Caco-2 (cell line): ENCODE measurements at regions of chr14 and their contacts with region 1.

Region 1: GRCh38 chr14:26917086-26917485 is 319.3 kb upstream of the NOVA1 start:
- DNase-seq: peak in 1 of 2 experiments; percentile 5
- H3K4me3 ChIP-seq: no peak overlapping the region
- H3K4me3 Mint-ChIP-seq: no peak overlapping the region
- H3K27ac Mint-ChIP-seq: no peak overlapping the region
- H3K4me1 ChIP-seq: no peaks in the 10 kb centered on the region
- H3K4me1 Mint-ChIP-seq: no peaks in the 10 kb centered on the region
- H3K27me3 ChIP-seq: no peaks in the 10 kb centered on the region
- H3K27me3 Mint-ChIP-seq: no peaks in the 10 kb centered on the region
- CTCF ChIP-seq: peak in 1 of 2 experiments; percentile 35

Region 2: DNA sequence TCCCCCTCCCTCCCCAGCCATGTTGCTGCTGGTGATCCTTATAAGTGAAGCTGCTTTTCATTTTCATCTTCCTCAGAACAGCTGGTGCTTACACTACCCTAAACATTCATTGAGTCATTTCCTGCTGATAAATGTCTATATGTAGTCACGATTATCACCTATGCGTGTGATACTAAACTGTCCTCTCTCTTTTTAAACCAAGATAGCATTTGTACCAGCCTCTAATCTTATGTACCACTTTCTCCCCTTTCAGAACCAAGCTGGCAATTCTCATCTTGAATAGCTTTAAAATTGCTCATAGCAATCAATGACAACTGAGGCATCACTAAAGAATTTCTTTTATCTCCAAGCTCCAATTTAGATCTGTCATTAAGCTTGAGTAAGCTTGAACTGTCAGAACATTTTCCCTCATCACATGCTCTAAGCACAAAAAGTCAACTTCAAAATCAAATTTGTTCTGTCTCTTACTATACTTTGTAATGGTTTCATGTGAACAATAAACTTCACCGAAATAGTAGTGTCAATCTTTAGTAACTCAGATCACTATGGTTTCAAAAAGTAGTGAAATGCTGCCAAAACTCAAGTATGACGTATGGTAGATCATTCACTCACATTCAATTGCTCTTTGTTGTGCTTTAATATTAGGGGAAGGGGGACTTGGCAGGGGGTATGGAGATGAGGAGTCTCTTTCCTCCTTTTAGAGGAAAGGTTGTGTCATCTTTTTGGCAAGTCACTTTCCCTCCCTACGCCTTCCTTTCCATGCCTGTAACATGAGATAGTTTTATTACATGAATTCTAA is 141.1 kb before region 1 on chr14:
- CTCF ChIA-PET with region 1: no interaction called
- POLR2A ChIA-PET with region 1: no interaction called
- intact Hi-C with region 1: loop called (anchors 1 kb)
- DNase-seq: no peak
- H3K4me3 ChIP-seq: no peak overlapping the region
- H3K4me3 Mint-ChIP-seq: peak overlapping the region; percentile 19
- H3K27ac Mint-ChIP-seq: no peak overlapping the region
- H3K4me1 ChIP-seq: no peaks in the 10 kb centered on the region; the same call in 1 of the 2 replicates
- H3K4me1 Mint-ChIP-seq: peaks cover 13% of the 10 kb centered on the region
- H3K27me3 ChIP-seq: no peaks in the 10 kb centered on the region
- H3K27me3 Mint-ChIP-seq: no peaks in the 10 kb centered on the region
- CTCF ChIP-seq: no peak

Region 3: DNA sequence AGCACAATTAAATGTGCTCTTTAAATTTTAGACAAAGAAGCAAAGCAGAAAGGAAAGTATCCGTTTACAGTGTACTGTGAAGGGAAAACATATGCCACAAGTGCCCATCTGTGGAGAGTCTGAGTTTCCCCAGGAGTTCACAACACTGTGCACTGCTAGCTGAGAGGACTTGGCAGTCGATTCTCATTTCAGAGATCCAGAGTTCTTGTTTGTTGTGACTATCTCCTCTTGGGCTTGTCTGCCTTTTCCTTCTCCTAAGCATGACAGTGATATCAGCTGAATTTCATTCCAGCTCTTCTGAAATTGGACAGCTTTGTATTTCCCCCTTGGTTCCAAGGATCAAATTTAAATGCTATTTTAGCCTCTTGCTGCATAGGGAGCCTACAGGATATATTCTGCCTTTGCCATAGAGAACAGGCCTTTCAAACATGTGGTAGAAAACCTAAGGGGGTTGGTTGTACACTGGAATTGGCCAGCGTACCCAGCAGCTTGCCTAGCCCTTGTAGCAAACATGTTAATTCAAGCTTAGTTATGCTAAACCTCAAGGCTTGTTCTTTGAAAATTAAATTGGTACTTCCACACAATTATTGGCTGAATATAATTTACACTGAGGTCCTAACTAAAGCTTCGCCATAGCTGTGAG is 60.1 kb before region 1 on chr14:
- CTCF ChIA-PET with region 1: no interaction called
- POLR2A ChIA-PET with region 1: no interaction called
- intact Hi-C with region 1: no loop called
- DNase-seq: no peak
- H3K4me3 ChIP-seq: no peak overlapping the region
- H3K4me3 Mint-ChIP-seq: no peak overlapping the region
- H3K27ac Mint-ChIP-seq: no peak overlapping the region
- H3K4me1 ChIP-seq: no peaks in the 10 kb centered on the region
- H3K4me1 Mint-ChIP-seq: no peaks in the 10 kb centered on the region
- H3K27me3 ChIP-seq: no peaks in the 10 kb centered on the region
- H3K27me3 Mint-ChIP-seq: no peaks in the 10 kb centered on the region
- CTCF ChIP-seq: no peak